ENCODE measurements at regions of chr1 and their contacts with region 1.

Region 1: GRCh38 chr1:11298390-11299224 is 25.6 kb downstream of the UBIAD1 start:
- DNase-seq: no peak
- H3K4me3 ChIP-seq: no peak overlapping the region
- H3K27ac ChIP-seq: no peak overlapping the region
- H3K4me1 ChIP-seq: no peaks in the 10 kb centered on the region
- H3K27me3 ChIP-seq: no peaks in the 10 kb centered on the region
- CTCF ChIP-seq: no peak

Region 2: DNA sequence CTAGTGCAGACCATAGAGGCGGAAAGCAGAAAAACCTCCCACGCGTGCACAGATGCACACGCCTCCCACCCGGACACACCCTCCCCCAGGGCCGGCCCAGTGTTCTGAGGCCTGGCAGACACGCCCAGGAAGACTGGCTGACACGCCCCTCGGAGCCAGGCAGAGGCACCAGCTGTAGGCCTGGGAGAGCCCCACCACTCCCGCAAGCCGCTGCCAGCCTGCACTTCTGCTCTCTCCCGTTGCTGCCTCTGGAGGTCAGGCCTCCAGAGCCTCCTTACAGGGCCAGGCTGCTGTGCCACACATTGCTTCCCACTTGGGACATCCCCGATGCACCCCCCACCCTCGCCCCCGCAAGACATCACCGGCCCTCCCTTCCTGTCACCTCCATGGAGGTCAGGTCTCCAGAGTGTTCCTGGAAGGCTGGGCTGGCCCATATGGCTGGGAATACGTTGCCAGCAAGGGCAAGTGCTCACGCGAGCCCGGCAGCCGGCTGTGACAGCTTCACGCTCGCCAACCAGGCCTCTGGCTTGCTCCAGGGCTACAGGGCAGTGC is 542.6 kb before region 1 on chr1:
- CTCF ChIA-PET with region 1: no interaction called
- dilution Hi-C with region 1: no loop called
- in situ Hi-C with region 1: no loop called
- intact Hi-C with region 1: no loop called
- DNase-seq: peak; percentile 6
- H3K4me3 ChIP-seq: no peak overlapping the region
- H3K27ac ChIP-seq: no peak overlapping the region
- H3K4me1 ChIP-seq: peaks cover 5% of the 10 kb centered on the region
- H3K27me3 ChIP-seq: no peaks in the 10 kb centered on the region
- CTCF ChIP-seq: no peak

Region 3: DNA sequence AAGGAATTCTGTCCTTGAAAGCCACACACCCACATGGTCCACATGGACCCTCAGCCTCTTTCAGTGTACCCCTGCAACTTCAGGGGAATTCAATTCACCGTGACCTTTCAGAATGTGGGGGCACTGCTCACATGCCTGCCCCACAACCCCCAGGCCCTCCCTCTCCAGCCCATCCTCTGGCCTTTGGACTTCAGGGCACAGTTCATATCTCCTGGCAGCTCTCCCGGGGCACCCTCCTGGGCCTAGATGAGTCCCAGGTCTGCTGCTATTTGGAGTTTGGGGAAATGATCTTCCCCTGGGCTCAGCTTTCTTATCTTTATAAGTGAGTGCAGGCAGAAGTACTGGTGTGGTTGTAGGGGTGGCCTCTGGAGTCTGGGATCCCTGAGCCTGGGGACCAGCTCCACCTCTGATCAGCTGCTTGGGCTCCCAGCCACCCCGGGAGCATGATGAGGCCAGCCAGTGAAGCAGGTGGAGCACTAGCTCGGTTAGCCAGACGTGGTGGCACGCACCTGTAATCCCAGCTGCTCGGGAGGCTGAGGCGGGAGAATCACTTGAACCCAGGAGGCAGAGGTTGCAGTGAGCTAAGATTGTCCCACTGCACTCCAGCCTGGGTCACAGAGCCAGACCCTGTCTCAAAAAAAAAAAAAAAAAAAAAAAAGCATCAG is 479.2 kb after region 1 on chr1:
- CTCF ChIA-PET with region 1: no interaction called
- dilution Hi-C with region 1: loop called (anchors 5 kb)
- in situ Hi-C with region 1: no loop called
- intact Hi-C with region 1: no loop called
- DNase-seq: no peak
- H3K4me3 ChIP-seq: no peak overlapping the region
- H3K27ac ChIP-seq: no peak overlapping the region
- H3K4me1 ChIP-seq: no peaks in the 10 kb centered on the region
- H3K27me3 ChIP-seq: no peaks in the 10 kb centered on the region
- CTCF ChIP-seq: no peak

Measured in mammary epithelial cell (primary cell).